ENCODE measurements at regions of chr4 and their contacts with region 1.

Region 1: DNA sequence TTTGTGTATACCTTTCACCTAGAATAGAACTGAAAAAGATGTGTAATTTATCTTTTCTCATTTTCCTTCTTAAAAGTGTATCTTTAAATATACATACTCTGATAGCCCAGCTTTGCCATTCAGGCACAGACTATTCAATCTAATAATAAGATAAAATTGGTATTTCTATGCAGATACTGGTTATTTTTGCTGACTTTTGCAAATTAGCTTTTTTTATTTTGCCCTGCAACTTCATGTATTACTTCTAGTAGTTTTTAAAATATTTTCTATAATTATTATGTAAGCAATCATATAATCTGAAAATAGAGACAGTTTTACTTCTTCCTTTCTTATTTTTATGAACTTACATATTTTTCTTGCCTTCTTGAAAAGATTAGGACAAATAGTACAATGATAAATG is 45.4 kb upstream of the FREM3 start:
- DNase-seq: no peak
- H3K4me3 Mint-ChIP-seq: no peak overlapping the region
- H3K27ac Mint-ChIP-seq: no peak overlapping the region
- H3K4me1 Mint-ChIP-seq: no peaks in the 10 kb centered on the region
- H3K27me3 Mint-ChIP-seq: no peaks in the 10 kb centered on the region

Region 2: GRCh38 chr4:143575331-143575730 is 170.5 kb before region 1 on chr4:
- CTCF ChIA-PET with region 1: no interaction called
- intact Hi-C with region 1: no loop called
- DNase-seq: no peak
- H3K4me3 Mint-ChIP-seq: no peak overlapping the region
- H3K27ac Mint-ChIP-seq: no peak overlapping the region
- H3K4me1 Mint-ChIP-seq: no peaks in the 10 kb centered on the region
- H3K27me3 Mint-ChIP-seq: no peaks in the 10 kb centered on the region

Region 3: DNA sequence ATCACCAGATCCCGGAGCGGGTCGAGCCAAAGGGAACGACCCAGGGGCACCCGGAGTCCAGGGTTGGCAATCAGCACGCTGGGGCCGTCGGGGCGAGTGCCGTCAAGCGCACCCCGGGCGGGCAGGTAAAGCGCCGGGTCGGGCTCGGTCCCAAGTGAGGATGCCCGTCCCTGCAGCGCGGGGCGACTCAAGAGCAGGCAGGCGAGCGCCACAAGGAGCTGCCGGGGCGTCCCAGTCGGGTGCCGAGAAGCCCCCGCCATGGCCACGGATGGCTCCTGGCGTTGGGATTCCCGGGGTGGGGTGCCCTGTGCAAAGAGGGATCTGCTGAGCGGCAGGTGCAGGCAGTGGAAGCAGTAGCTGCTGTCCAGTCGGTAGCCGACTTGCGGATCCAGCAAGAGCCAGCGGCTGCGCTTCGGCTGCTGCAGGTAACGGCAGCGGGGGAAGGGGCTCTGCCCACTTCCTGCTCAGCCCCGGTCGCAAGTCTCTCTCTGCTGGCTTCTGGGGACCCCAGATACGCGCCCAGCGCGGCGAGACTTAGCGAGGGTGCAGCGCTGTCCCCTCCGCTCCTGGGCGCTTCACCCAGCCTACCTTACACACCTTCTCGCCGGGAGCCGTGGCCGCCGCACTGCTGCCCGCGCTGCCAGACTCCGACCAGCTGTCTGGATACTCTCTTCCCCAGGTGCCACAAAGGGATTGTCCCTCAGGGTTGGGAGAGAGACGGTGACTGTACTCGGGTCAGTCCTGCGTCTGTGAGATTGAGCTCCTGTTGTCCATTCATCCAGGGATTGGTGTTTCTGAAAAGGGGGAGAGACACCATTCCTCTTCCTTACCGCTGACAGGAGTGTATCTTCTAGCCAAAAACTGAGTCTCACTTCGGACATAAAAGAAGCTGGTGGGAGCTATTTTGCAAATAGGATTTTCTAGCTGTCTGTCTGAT is 45.2 kb before region 1 on chr4 and contains the start of gene FREM3:
- CTCF ChIA-PET with region 1: no interaction called
- intact Hi-C with region 1: loop called (anchors 1 kb)
- DNase-seq: no peak
- H3K4me3 Mint-ChIP-seq: peak within 1 kb of the TSS; percentile 35
- H3K27ac Mint-ChIP-seq: no peak within 1 kb of the TSS
- H3K4me1 Mint-ChIP-seq: peaks cover 15% of the 10 kb centered on the region
- H3K27me3 Mint-ChIP-seq: peaks cover 46% of the 10 kb centered on the region
- total RNA-seq, gene FREM3: not detected